Gastrocnemius medialis (tissue), 4 donors: ENCODE measurements at regions of chr1 and their contacts with region 1.

Region 1: DNA sequence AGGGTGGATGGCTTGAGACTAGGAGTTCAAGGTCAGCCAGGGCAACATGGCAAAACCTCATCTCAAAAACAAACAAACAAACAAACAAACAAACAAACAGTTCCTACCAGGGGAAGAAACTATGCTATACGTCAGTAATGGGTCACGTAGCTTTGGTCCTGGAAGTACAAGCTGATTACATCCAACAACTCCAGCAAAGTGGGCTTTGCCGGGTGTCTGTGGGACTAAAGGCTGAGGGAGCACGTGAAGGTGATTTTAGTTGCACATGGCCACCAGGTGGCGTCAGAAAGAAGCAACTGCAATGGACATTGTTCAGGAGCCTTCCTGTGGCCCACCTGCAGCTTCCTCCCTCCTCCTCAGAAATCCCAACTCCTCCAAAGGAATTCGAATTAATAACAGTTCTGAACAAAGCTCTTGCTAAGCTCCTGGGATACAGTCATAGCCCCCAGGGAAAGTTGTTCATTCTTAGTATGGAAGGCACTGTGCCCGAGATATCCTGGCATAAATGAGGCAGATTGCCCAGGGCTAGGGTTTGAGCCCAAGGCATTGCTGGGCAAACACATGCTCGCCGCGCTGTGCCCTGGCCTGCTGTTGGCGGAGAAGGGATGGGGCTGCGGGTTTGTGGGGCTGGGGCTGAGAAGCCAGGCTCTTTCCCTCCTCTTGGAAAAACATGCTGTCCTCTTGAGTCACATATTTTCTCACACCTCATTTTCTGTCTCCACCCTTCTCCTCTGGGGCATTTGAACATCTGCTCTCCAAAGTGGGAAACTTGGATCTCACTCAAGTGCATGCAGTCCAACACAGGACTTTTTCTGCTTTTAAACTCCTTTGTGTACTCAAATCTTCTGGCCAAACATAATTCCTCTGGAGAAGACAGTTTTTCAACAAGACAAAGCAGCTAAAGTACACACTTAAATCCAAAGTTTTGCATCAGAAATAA is 28.6 kb downstream of the AKNAD1 start:
- DNase-seq: peak; percentile 62 to 77
- ATAC-seq: peak; percentile 70 to 71
- H3K4me3 ChIP-seq: no peak overlapping the region
- H3K27ac ChIP-seq: peak overlapping the region; percentile 75 to 80 (median 76)
- H3K4me1 ChIP-seq: peaks cover 27 to 32% of the 10 kb centered on the region in 2 donors
- H3K27me3 ChIP-seq: no peaks in the 10 kb centered on the region
- CTCF ChIP-seq: peak; percentile 75 to 87 (median 79)
- POLR2A ChIP-seq: no peak

Region 2: DNA sequence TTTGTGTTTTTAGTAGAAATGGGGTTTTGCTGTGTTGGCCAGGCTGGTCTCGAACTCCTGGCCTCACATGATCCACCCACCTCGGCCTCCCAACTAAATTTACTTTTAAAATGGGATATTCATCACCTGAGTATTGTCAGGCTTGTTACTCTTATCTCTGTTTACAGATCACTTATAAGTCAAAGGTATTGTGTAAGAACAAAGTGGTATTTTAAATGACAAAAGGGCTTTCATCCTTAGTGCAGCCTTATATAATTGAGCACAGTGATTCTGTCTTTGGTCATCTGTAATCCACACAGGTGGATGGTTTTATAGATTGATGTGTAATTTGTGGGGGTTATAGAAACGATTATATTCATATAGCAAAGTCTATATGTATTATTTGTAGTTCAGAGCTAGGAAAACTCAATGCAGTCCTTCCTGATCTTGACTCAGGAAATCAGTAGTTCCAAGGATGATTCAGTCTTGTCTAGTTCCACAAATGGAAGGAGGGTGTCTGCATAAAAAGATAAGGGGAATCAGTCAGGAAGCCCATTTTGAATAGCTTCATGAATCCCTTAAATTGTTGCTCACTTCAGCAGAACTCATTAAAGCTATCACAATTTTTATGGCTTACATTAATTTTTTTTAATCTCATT is 47.2 kb before region 1 on chr1:
- in situ Hi-C with region 1: no loop called
- intact Hi-C with region 1: no loop called
- DNase-seq: no peak
- ATAC-seq: no peak
- H3K4me3 ChIP-seq: no peak overlapping the region
- H3K27ac ChIP-seq: no peak overlapping the region
- H3K4me1 ChIP-seq: no peaks in the 10 kb centered on the region
- H3K27me3 ChIP-seq: no peaks in the 10 kb centered on the region
- CTCF ChIP-seq: no peak
- POLR2A ChIP-seq: no peak

Region 3: GRCh38 chr1:108877348-108878159 is 49.3 kb after region 1 on chr1:
- in situ Hi-C with region 1: no loop called
- intact Hi-C with region 1: loop called (anchors 1 kb)
- DNase-seq: no peak
- ATAC-seq: peak; percentile 3 to 27
- H3K4me3 ChIP-seq: peak overlapping the region; percentile 79 to 96 (median 84)
- H3K27ac ChIP-seq: peak overlapping the region; percentile 73 to 81 (median 77)
- H3K4me1 ChIP-seq: peaks cover 5 to 9% of the 10 kb centered on the region in 2 donors
- H3K27me3 ChIP-seq: no peaks in the 10 kb centered on the region
- CTCF ChIP-seq: no peak
- POLR2A ChIP-seq: no peak

Region 4: DNA sequence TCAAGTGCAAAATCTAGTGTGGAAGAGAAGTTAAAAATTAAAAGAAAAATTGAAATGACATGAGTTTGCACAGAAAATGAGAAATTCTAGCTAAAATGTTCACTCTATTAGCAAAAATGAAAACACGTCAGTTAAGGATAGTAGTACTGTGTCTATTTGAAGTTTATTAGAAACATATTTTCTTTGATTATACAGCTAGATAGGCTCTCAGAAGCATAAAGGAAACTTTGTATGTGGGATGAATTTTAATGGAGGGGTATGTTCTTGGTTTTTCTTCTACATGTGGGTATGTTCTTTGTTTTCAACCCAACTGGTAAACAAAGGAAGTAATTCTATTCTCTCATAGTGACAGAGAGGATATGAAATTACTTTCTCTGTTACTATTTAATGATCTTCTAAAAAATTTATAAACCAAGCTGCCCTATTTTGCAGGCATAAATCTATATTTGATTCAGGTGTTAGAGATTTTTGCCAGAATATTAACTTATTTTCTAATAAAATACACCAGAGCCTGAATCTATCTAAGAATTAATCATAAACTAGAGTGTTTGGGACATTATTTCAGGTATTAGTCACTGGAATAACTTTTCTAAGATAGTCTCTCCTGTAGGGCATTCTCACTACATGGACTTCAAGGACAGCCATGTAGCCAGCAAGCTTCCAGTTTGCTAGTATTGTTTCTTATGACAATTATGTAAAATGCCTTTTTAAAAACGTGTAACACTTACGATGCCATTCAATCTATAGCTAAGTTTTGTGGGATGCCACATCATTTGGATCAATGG is 64.3 kb after region 1 on chr1:
- in situ Hi-C with region 1: loop called (anchors 5 kb)
- intact Hi-C with region 1: no loop called
- DNase-seq: no peak
- ATAC-seq: no peak
- H3K4me3 ChIP-seq: no peak overlapping the region
- H3K27ac ChIP-seq: no peak overlapping the region
- H3K4me1 ChIP-seq: peaks cover 5 to 8% of the 10 kb centered on the region in 2 donors
- H3K27me3 ChIP-seq: peaks cover 0 to 3% (median 0%) of the 10 kb centered on the region in 3 donors
- CTCF ChIP-seq: no peak
- POLR2A ChIP-seq: no peak

Region 5: DNA sequence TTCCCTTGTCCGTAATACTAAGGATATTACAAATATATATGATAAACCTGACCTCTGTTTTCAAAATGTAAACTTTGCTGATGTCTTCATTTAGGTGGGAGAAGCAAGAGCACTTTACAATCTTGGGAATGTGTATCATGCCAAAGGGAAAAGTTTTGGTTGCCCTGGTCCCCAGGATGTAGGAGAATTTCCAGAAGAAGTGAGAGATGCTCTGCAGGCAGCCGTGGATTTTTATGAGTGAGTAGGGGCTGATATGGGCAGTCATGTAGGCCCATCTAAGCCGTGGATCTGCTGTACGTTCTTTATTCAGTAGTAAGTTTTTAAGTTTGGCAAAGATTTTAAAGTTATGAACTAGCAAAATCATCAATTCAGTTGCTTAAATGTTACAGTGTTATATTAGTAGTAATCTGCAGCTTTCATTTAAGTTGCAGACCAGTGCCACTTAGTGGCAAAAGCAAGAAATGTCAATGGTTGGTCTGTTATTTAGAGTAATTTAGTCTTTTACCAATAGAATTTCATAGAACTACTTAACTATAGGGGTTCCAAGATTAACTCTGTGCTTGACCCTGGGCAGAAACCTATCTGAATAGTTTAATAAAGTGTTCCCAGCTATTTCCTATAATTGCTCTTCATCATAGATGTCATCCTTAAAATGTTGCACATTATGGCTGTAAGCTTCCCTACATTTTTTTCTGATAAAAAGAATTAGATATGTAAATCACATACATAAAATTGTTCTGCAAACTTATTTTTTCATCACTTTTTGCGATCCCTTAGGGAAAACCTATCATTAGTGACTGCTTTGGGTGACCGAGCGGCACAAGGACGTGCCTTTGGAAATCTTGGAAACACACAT is 69.8 kb after region 1 on chr1:
- in situ Hi-C with region 1: loop called (anchors 5 kb)
- intact Hi-C with region 1: loop called (anchors 1 kb)
- DNase-seq: no peak
- ATAC-seq: peak; percentile 70
- H3K4me3 ChIP-seq: no peak overlapping the region
- H3K27ac ChIP-seq: peak overlapping the region in 1 of 4 donors; percentile 62
- H3K4me1 ChIP-seq: peaks cover 5 to 8% of the 10 kb centered on the region in 2 donors
- H3K27me3 ChIP-seq: no peaks in the 10 kb centered on the region
- CTCF ChIP-seq: peak; percentile 48 to 87 (median 74)
- POLR2A ChIP-seq: no peak